Gastrocnemius medialis (tissue), 4 donors: ENCODE measurements at regions of chr10 and their contacts with region 1.

Region 1: DNA sequence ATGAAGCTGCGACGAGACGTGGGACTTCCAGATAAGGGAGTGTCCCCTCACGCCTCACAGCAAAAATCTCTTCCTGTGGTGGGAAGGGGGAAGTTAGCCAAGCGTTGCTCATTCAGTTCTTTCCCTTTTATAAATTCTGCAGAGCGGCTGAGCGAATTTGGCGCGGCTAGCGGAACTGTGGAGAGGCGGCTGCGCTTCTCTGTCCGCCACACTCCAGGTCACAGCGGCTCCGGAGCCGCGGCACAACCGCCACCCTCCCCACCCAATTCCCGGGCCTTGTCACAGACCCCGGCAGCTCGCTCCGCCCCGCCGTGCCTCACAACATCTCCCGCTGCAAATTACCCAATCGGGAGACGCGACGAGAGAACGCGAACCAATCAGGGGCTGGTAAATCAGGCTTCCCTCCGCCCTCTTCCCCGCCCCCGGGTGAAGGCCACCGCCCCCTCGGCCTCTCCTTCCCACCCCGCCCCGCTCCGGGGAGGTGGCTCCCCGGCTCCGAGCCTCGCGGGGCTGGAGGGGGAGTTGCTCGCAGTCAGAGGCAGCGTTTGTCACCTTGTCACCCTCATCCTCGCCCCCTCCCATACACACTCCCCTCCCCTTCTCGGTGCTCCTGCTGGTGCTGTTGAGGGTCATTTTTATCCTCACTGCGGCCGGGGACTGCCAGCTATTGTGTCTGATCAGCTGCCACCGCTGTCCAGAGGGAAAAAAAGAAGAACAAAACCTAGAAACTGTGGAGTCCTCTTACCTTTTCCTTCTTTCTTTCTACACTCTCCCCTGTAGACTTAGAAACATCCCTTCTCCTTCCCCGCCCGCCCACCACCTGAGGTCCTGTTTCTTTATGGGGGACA is 918 bp upstream of the ARHGAP21 start:
- DNase-seq: peak; percentile 98
- ATAC-seq: peak; percentile 85 to 87
- H3K4me3 ChIP-seq: peak overlapping the region; percentile 81 to 98 (median 84)
- H3K27ac ChIP-seq: peak overlapping the region; percentile 93 to 98 (median 94)
- H3K4me1 ChIP-seq: peaks cover 25 to 30% of the 10 kb centered on the region in 2 donors
- H3K27me3 ChIP-seq: no peaks in the 10 kb centered on the region
- CTCF ChIP-seq: no peak
- POLR2A ChIP-seq: peak; percentile 90 to 97

Region 2: DNA sequence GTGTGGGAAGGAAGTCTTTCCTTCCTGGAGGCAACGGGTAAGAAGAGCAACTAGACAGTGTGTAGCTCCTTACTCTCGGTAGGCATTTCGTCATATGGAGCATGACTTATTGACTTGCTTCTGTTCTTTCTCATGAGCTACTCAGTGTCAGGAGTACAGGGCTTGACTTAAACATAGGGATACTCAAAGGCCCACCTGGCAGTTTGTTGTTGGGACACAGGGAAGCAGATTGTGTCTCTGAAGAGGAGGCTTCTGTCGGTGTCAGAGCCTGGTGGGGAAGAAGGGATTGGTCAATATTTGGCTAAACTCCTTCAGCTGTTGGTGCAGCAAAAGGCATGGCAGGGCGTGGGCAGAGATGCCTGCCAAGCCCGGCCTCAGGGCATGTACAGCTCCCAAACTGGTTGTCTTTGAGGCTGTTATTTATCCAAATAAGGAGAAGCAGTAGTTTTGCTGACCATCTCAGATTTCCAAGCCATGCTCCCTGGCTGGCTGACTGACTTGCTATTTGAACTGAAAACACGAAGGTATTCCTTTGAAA is 266.8 kb before region 1 on chr10:
- in situ Hi-C with region 1: no loop called
- intact Hi-C with region 1: loop called (anchors 1 kb)
- DNase-seq: peak in 1 of 2 donors; percentile 65
- ATAC-seq: peak; percentile 44 to 76
- H3K4me3 ChIP-seq: no peak overlapping the region
- H3K27ac ChIP-seq: peak overlapping the region; percentile 63 to 80 (median 74)
- H3K4me1 ChIP-seq: peaks cover 76 to 93% of the 10 kb centered on the region in 2 donors
- H3K27me3 ChIP-seq: no peaks in the 10 kb centered on the region
- CTCF ChIP-seq: no peak
- POLR2A ChIP-seq: peak in 1 of 2 donors; percentile 15

Region 3: GRCh38 chr10:24617771-24618391 is 106.7 kb before region 1 on chr10:
- in situ Hi-C with region 1: no loop called
- intact Hi-C with region 1: loop called (anchors 1 kb)
- DNase-seq: peak; percentile 19 to 44
- ATAC-seq: peak; percentile 44 to 81
- H3K4me3 ChIP-seq: no peak overlapping the region
- H3K27ac ChIP-seq: no peak overlapping the region
- H3K4me1 ChIP-seq: no peaks in the 10 kb centered on the region
- H3K27me3 ChIP-seq: no peaks in the 10 kb centered on the region
- CTCF ChIP-seq: peak; percentile 67 to 90 (median 72)
- POLR2A ChIP-seq: no peak

Region 4: DNA sequence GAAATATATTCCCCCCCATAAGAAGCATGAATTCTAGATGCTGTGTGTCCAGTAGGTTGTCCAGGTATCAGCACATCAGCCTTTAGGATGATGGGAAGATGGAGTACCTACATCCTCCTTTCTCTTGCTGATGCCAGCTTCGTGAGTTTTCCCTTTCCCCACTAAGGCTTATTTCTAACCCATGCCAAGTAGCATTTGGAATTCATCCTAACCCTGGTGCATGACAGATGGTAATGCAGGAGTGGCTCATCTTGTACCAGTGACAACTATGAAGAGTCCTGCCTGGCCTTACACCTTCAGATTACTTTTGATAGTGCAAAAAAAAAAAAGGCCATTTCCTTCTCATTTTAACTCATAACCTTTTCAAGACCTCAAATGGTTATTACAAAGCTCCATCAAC is 59.6 kb before region 1 on chr10:
- in situ Hi-C with region 1: no loop called
- intact Hi-C with region 1: no loop called
- DNase-seq: no peak
- ATAC-seq: no peak
- H3K4me3 ChIP-seq: no peak overlapping the region
- H3K27ac ChIP-seq: no peak overlapping the region
- H3K4me1 ChIP-seq: peaks cover 9 to 12% of the 10 kb centered on the region in 2 donors
- H3K27me3 ChIP-seq: no peaks in the 10 kb centered on the region
- CTCF ChIP-seq: no peak
- POLR2A ChIP-seq: no peak

Region 5: DNA sequence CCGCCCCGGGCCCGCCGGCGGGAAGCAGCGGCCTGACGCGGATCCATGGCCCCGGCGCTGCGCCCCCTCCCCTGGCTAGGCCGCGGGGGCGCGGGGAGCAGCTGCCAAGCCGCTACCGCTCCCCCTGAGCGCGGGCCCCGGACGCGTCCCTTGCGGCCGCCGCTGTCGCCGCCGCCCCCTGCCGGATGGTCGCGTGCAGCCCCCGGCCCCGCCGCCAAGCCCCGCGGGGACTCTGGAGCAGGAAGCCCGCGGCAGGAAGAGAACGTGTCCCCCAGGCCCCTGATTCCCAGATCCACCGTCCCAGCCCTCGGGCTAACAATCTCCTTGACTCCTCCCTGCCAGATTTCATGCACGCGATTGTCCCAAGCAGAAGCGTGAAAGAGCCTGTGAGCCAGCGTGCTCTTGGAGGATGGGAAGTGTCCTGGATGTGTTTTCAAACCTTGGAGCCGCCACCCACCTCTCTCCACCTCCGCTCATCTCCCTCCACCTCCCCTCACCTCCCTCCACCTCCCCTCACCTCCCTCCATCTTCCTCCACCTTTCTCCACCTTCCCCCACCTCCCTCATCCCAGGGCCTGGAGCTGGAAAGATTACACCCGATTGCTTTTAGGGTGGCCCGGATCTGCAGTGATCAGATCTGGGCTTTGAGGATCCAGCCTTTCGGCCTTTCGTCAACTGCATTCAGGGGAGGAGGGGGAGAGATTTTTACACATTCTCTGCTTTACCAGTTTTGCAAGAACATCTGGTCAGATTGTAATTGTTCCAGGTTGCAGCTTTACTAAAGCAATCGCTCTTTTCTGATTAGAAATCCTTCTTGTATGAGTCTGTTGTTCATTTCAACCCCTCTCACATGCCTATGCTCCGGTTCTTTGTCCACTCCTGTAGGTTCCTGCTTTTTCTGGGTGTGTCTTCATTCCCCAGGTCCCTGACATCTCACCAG is 228.4 kb after region 1 on chr10:
- in situ Hi-C with region 1: no loop called
- intact Hi-C with region 1: loop called (anchors 2 kb)
- DNase-seq: peak in 1 of 2 donors; percentile 23
- ATAC-seq: peak; percentile 39 to 57
- H3K4me3 ChIP-seq: peak overlapping the region; percentile 54 to 72 (median 61)
- H3K27ac ChIP-seq: peak overlapping the region; percentile 58 to 67 (median 65)
- H3K4me1 ChIP-seq: peaks cover 0 to 5% of the 10 kb centered on the region in 2 donors
- H3K27me3 ChIP-seq: peaks cover 0 to 3% (median 0%) of the 10 kb centered on the region in 3 donors
- CTCF ChIP-seq: peak in 4 of 5 experiments; percentile 18 to 37 (median 33)
- POLR2A ChIP-seq: no peak

Region 6: GRCh38 chr10:24974976-24975375 is 250.4 kb after region 1 on chr10:
- in situ Hi-C with region 1: loop called in 2 of 4 experiments (anchors 25 kb)
- intact Hi-C with region 1: no loop called
- DNase-seq: peak; percentile 20 to 50
- ATAC-seq: peak; percentile 81 to 91
- H3K4me3 ChIP-seq: no peak overlapping the region
- H3K27ac ChIP-seq: peak overlapping the region in 1 of 4 donors; percentile 32
- H3K4me1 ChIP-seq: peaks cover 0 to 3% of the 10 kb centered on the region in 2 donors
- H3K27me3 ChIP-seq: no peaks in the 10 kb centered on the region
- CTCF ChIP-seq: no peak
- POLR2A ChIP-seq: no peak

Region 7: GRCh38 chr10:25016376-25017154 is 292.0 kb after region 1 on chr10 and contains the start of gene THNSL1:
- in situ Hi-C with region 1: no loop called
- intact Hi-C with region 1: loop called (anchors 1 kb)
- DNase-seq: peak; percentile 97 to 99
- ATAC-seq: peak; percentile 94 to 98
- H3K4me3 ChIP-seq: peak within 1 kb of the TSS; percentile 78 to 87 (median 83)
- H3K27ac ChIP-seq: peak within 1 kb of the TSS; percentile 90 to 94 (median 92)
- H3K4me1 ChIP-seq: peaks cover 13 to 16% of the 10 kb centered on the region in 2 donors
- H3K27me3 ChIP-seq: no peaks in the 10 kb centered on the region
- CTCF ChIP-seq: no peak
- POLR2A ChIP-seq: peak; percentile 80 to 94
- total RNA-seq, gene THNSL1: 0.82 to 2.0 (median 1.7) TPM

Region 8: DNA sequence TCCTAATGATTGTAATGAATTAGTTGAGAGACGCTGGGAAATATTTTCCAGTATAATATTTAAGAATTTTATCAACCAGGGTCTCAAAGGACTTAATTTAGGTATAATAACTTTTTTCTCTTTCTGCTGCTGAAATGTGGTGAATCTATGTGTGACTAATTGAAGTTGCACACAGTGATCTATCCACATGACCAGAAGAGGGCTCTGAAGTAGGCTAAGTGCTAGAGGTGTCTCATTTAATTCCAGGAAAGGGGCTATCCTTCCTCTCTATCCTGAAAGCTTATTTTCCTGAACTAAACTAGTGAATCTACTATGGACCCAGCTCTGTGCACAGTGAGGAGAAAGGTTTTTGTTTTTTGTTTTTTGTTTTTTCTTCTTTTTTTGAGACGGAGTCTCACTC is 915.0 kb after region 1 on chr10:
- in situ Hi-C with region 1: no loop called
- intact Hi-C with region 1: no loop called
- DNase-seq: no peak
- ATAC-seq: no peak
- H3K4me3 ChIP-seq: no peak overlapping the region
- H3K27ac ChIP-seq: no peak overlapping the region
- H3K4me1 ChIP-seq: no peaks in the 10 kb centered on the region
- H3K27me3 ChIP-seq: no peaks in the 10 kb centered on the region
- CTCF ChIP-seq: no peak
- POLR2A ChIP-seq: no peak